CD4-positive, alpha-beta memory T cell (primary cell): ENCODE measurements at regions of chr6 and their contacts with region 1.

Region 1: GRCh38 chr6:142155895-142156757 is 9.1 kb downstream of the VTA1 start:
- DNase-seq: peak in 4 of 5 donors; percentile 15 to 27 (median 24)
- H3K4me3 ChIP-seq: no peak overlapping the region
- H3K4me3 Mint-ChIP-seq: peak overlapping the region in 3 of 8 donors; percentile 4 to 52 (median 35)
- H3K27ac ChIP-seq: no peak overlapping the region
- H3K27ac Mint-ChIP-seq: peak overlapping the region; percentile 1 to 91 (median 57)
- H3K4me1 ChIP-seq: peaks cover 32% of the 10 kb centered on the region
- H3K4me1 Mint-ChIP-seq: peaks cover 35 to 61% (median 50%) of the 10 kb centered on the region in 4 donors
- H3K27me3 ChIP-seq: no peaks in the 10 kb centered on the region
- H3K27me3 Mint-ChIP-seq: no peaks in the 10 kb centered on the region

Region 2: GRCh38 chr6:142167486-142167885 is 11.4 kb after region 1 on chr6:
- CTCF ChIA-PET with region 1: interaction called, 12 read pairs
- POLR2A ChIA-PET with region 1: no interaction called
- intact Hi-C with region 1: loop called (anchors 2 kb)
- DNase-seq: no peak
- H3K4me3 ChIP-seq: no peak overlapping the region
- H3K4me3 Mint-ChIP-seq: no peak overlapping the region
- H3K27ac ChIP-seq: no peak overlapping the region
- H3K27ac Mint-ChIP-seq: no peak overlapping the region
- H3K4me1 ChIP-seq: peaks cover 9% of the 10 kb centered on the region
- H3K4me1 Mint-ChIP-seq: peaks cover 15 to 25% (median 19%) of the 10 kb centered on the region in 4 donors
- H3K27me3 ChIP-seq: no peaks in the 10 kb centered on the region
- H3K27me3 Mint-ChIP-seq: no peaks in the 10 kb centered on the region

Region 3: DNA sequence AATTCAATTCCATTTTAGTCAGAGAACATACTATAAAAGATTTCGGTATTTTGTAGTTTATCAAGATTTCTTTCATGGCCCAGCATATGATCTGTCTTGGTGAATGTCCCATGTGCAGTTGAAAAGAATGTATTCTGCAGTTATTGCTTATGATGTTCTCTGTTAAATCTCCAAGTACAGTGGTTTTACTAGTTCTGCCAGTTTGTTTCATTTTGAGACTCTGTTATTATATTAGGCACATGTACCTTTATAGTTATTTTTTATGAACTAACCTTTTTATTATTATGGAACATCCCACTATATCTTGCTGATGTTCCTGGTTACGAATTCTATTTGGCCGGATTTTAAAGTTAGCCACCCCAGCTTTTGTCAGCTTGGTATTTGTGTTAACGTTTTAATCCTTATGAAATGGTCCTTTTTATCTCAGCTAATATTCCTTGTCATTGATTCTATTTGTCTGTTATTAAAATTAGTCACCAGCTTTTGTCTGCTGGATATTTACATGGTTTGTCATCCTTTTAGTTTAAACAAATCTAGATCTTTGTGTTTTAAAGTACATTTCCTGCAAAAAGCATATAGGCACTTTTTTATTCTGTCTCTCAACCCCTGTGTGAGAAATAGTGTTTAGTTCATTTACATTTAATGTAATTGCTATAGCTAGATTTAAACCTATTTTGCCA is 39.9 kb after region 1 on chr6:
- CTCF ChIA-PET with region 1: interaction called, 14 read pairs
- POLR2A ChIA-PET with region 1: no interaction called
- intact Hi-C with region 1: no loop called
- DNase-seq: no peak
- H3K4me3 ChIP-seq: no peak overlapping the region
- H3K4me3 Mint-ChIP-seq: no peak overlapping the region
- H3K27ac ChIP-seq: no peak overlapping the region
- H3K27ac Mint-ChIP-seq: peak overlapping the region in 4 of 7 donors; percentile 2 to 42 (median 33)
- H3K4me1 ChIP-seq: peaks cover 22% of the 10 kb centered on the region
- H3K4me1 Mint-ChIP-seq: peaks cover 26 to 49% (median 37%) of the 10 kb centered on the region in 4 donors
- H3K27me3 ChIP-seq: no peaks in the 10 kb centered on the region
- H3K27me3 Mint-ChIP-seq: no peaks in the 10 kb centered on the region

Region 4: DNA sequence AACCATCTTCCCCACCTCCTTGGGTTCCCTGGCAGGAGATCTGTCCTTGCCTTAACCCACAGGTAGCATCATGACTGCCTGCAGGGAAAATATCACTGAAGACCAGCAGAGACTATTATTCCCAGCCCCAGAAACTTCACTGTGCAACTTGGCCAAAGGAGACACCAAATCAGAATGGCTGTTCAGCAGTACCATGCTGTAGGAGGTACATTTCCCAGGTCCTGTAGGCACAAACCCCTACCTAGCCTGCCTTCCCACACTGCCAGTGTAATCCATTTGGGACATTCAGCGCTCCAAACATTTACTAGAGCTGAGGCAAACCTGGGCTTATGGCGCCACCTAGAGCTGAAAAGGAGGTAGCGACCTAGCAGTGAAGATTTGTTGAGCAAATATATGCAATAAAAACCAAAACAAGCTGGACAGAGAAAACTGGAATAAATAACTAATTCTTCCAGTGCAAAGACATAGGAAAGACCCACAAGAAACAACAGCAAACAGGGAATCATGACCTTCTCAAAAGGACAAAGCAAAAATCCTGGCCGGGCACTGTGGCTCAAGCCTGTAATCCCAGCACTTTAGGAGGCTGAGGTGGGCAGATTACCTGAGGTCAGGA is 51.2 kb after region 1 on chr6:
- CTCF ChIA-PET with region 1: interaction called, 19 read pairs
- POLR2A ChIA-PET with region 1: no interaction called
- intact Hi-C with region 1: no loop called
- DNase-seq: peak; percentile 27 to 42 (median 33)
- H3K4me3 ChIP-seq: no peak overlapping the region
- H3K4me3 Mint-ChIP-seq: no peak overlapping the region
- H3K27ac ChIP-seq: no peak overlapping the region
- H3K27ac Mint-ChIP-seq: peak overlapping the region in 2 of 7 donors; percentile 35 to 74
- H3K4me1 ChIP-seq: no peaks in the 10 kb centered on the region
- H3K4me1 Mint-ChIP-seq: peaks cover 0 to 5% (median 2%) of the 10 kb centered on the region in 4 donors
- H3K27me3 ChIP-seq: no peaks in the 10 kb centered on the region
- H3K27me3 Mint-ChIP-seq: no peaks in the 10 kb centered on the region

Region 5: GRCh38 chr6:142246960-142247359 is 90.8 kb after region 1 on chr6:
- CTCF ChIA-PET with region 1: no interaction called
- POLR2A ChIA-PET with region 1: no interaction called
- intact Hi-C with region 1: no loop called
- DNase-seq: no peak
- H3K4me3 ChIP-seq: no peak overlapping the region
- H3K4me3 Mint-ChIP-seq: no peak overlapping the region
- H3K27ac ChIP-seq: no peak overlapping the region
- H3K27ac Mint-ChIP-seq: no peak overlapping the region
- H3K4me1 ChIP-seq: no peaks in the 10 kb centered on the region
- H3K4me1 Mint-ChIP-seq: no peaks in the 10 kb centered on the region
- H3K27me3 ChIP-seq: no peaks in the 10 kb centered on the region
- H3K27me3 Mint-ChIP-seq: peaks cover 2 to 4% of the 10 kb centered on the region in 2 donors

Region 6: GRCh38 chr6:142387997-142388815 is 232.1 kb after region 1 on chr6:
- CTCF ChIA-PET with region 1: interaction called, 4 read pairs
- POLR2A ChIA-PET with region 1: no interaction called
- intact Hi-C with region 1: loop called (anchors 1 kb)
- DNase-seq: peak in 4 of 5 donors; percentile 7 to 30 (median 11)
- H3K4me3 ChIP-seq: no peak overlapping the region
- H3K4me3 Mint-ChIP-seq: no peak overlapping the region
- H3K27ac ChIP-seq: no peak overlapping the region
- H3K27ac Mint-ChIP-seq: no peak overlapping the region
- H3K4me1 ChIP-seq: no peaks in the 10 kb centered on the region
- H3K4me1 Mint-ChIP-seq: no peaks in the 10 kb centered on the region
- H3K27me3 ChIP-seq: no peaks in the 10 kb centered on the region
- H3K27me3 Mint-ChIP-seq: peaks cover 0 to 3% of the 10 kb centered on the region in 2 donors

Region 7: GRCh38 chr6:142469220-142469619 is 313.1 kb after region 1 on chr6:
- CTCF ChIA-PET with region 1: no interaction called
- POLR2A ChIA-PET with region 1: no interaction called
- intact Hi-C with region 1: no loop called
- DNase-seq: no peak
- H3K4me3 ChIP-seq: no peak overlapping the region
- H3K4me3 Mint-ChIP-seq: no peak overlapping the region
- H3K27ac ChIP-seq: no peak overlapping the region
- H3K27ac Mint-ChIP-seq: no peak overlapping the region
- H3K4me1 ChIP-seq: no peaks in the 10 kb centered on the region
- H3K4me1 Mint-ChIP-seq: no peaks in the 10 kb centered on the region
- H3K27me3 ChIP-seq: no peaks in the 10 kb centered on the region
- H3K27me3 Mint-ChIP-seq: peaks cover 0 to 4% of the 10 kb centered on the region in 2 donors

Region 8: DNA sequence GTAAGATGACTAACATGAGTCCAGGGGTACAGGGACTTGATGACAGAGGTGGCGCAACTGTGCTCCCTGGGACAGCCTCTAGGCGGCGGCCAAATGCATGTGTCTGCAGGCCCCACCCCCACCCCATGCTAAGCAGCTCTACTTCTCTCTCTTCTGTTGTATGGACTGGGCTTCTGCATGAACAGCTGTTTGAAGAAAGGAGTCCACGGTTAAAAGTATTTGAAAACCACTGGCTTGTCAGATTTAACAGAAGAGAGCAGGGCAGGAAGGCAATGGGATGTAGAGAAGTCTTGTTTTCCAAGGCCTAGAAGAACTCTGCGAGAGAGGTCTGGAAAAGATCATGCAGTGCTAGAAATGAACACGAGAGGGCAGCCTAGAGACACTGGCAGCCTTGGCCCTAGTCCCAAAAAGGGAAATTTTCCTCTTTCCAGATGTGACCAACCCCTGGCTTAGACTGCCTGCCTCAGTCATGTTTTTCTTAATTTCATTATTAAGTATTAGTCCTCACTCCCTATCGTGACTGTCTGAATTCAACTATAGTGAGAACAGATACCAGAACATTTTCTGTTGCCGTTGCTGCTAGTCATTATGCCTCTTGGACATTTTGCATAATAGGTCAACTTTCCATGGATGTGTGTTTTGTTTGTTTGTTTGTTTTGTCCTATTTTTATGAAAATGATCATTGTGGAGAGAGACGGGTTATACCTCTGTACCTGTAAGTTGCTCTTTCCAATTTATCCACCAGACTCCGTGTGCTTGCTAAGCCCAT is 410.7 kb after region 1 on chr6:
- CTCF ChIA-PET with region 1: interaction called, 3 read pairs
- POLR2A ChIA-PET with region 1: no interaction called
- intact Hi-C with region 1: loop called (anchors 2 kb)
- DNase-seq: peak; percentile 47 to 49 (median 48)
- H3K4me3 ChIP-seq: no peak overlapping the region
- H3K4me3 Mint-ChIP-seq: peak overlapping the region in 2 of 8 donors; percentile 29 to 53
- H3K27ac ChIP-seq: no peak overlapping the region
- H3K27ac Mint-ChIP-seq: peak overlapping the region in 6 of 7 donors; percentile 24 to 64 (median 40)
- H3K4me1 ChIP-seq: peaks cover 52% of the 10 kb centered on the region
- H3K4me1 Mint-ChIP-seq: peaks cover 34 to 59% (median 51%) of the 10 kb centered on the region in 4 donors
- H3K27me3 ChIP-seq: no peaks in the 10 kb centered on the region
- H3K27me3 Mint-ChIP-seq: no peaks in the 10 kb centered on the region